CD8-positive, alpha-beta T cell (primary cell): ENCODE measurements at regions of chr4 and their contacts with region 1.

Region 1: GRCh38 chr4:143184217-143185116 is at the start of gene USP38:
- DNase-seq: peak; percentile 69 to 94 (median 85)
- ATAC-seq: peak; percentile 82
- H3K4me3 ChIP-seq: peak within 1 kb of the TSS; percentile 48 to 86
- H3K4me3 Mint-ChIP-seq: peak within 1 kb of the TSS; percentile 90
- H3K27ac ChIP-seq: peak within 1 kb of the TSS; percentile 91 to 93
- H3K27ac Mint-ChIP-seq: peak within 1 kb of the TSS; percentile 96
- H3K4me1 ChIP-seq: peaks cover 39% of the 10 kb centered on the region
- H3K4me1 Mint-ChIP-seq: peaks cover 61% of the 10 kb centered on the region
- H3K27me3 ChIP-seq: no peaks in the 10 kb centered on the region
- H3K27me3 Mint-ChIP-seq: no peaks in the 10 kb centered on the region
- CTCF ChIP-seq: no peak
- total RNA-seq, gene USP38: 38.4 to 40.2 TPM

Region 2: GRCh38 chr4:141215030-141215429 is 1969.4 kb before region 1 on chr4:
- CTCF ChIA-PET with region 1: no interaction called
- POLR2A ChIA-PET with region 1: no interaction called
- intact Hi-C with region 1: loop called (anchors 2 to 5 kb)
- DNase-seq: no peak
- ATAC-seq: no peak
- H3K4me3 ChIP-seq: no peak overlapping the region
- H3K4me3 Mint-ChIP-seq: no peak overlapping the region
- H3K27ac ChIP-seq: no peak overlapping the region
- H3K27ac Mint-ChIP-seq: no peak overlapping the region
- H3K4me1 ChIP-seq: no peaks in the 10 kb centered on the region
- H3K4me1 Mint-ChIP-seq: peaks cover 1% of the 10 kb centered on the region
- H3K27me3 ChIP-seq: no peaks in the 10 kb centered on the region
- H3K27me3 Mint-ChIP-seq: peaks cover 13% of the 10 kb centered on the region
- CTCF ChIP-seq: no peak

Region 3: DNA sequence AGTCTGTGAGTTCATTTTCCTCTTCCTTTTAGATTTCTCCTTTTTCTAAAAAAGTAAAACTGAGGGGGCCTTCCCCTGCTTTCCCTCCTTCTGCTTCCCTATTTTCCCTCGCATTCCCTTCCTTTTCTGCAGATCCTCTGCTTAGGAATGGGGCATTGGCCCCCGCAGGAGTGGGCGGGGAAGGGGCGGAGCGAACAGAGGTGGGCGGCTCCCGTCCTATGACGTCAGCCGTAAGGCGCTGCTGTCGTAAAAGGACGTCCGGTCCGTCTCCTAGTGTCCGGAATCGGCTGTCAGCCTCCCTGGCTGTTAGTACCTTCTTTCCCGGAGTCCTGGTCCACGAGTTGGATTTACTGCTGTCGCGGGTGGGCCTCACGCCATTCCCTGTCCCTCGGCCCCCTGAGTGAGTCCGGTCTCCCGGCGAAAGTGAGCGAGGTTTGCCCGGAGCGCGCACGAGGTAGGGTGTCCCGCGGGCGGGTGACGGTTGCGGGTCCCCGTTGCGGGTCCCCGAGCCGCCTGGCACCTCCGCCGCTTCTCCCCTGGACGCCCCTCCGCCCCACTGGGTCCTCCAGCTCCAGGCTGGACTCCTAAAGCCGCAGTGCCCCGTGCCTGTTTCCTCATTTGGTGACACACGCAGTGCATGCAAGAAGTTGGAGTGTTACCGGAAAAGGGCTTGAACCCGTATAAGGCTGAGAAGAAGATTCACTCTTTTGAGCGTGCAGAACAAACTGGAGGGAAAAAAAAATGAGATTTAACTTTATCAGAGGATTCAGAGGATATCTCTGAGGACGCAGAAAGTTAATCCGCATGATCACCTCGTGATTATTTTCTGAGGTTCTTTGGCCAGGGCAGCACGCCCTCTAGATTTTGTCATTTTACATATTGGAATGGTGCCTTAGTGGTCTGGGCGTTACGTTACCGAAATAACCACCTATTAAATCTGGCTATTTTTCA is 1963.5 kb before region 1 on chr4 and contains the start of gene ZNF330:
- CTCF ChIA-PET with region 1: no interaction called
- POLR2A ChIA-PET with region 1: no interaction called
- intact Hi-C with region 1: loop called (anchors 2 to 5 kb)
- DNase-seq: peak; percentile 79 to 95 (median 87)
- ATAC-seq: peak; percentile 91
- H3K4me3 ChIP-seq: peak within 1 kb of the TSS; percentile 88 to 91
- H3K4me3 Mint-ChIP-seq: peak within 1 kb of the TSS; percentile 95
- H3K27ac ChIP-seq: peak within 1 kb of the TSS; percentile 92
- H3K27ac Mint-ChIP-seq: peak within 1 kb of the TSS; percentile 96
- H3K4me1 ChIP-seq: peaks cover 18% of the 10 kb centered on the region
- H3K4me1 Mint-ChIP-seq: peaks cover 48% of the 10 kb centered on the region
- H3K27me3 ChIP-seq: no peaks in the 10 kb centered on the region
- H3K27me3 Mint-ChIP-seq: peaks cover 2% of the 10 kb centered on the region
- CTCF ChIP-seq: no peak
- total RNA-seq, gene ZNF330: 44.1 to 44.9 TPM

Region 4: DNA sequence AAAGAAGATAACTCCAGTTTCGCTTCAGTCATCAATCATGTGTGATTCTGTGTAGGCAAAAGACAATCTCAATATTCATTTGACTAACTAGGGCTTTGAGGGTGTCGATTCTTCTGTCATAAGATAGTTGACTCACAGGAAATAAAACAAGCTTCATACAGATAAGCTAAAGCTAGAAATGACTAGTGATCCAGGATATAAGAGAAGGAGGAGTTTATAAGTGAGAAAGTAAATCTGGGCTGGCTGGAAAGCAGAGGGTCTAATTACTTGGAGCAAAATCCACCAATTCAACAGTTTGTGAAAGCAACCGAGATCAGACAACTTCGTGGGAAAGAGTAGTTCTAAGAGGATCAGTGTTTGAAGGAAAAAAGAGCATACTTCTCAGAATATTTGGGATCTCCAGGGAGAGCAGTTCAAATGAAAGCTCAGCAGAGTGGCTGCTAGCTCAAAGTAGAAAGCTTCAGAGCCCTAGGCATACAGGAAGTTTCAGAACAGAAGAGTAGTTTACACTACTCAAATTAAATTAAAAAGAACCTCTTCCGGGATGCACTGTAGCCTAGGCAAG is 767.7 kb before region 1 on chr4:
- CTCF ChIA-PET with region 1: no interaction called
- POLR2A ChIA-PET with region 1: no interaction called
- intact Hi-C with region 1: loop called (anchors 5 to 10 kb)
- DNase-seq: peak in 2 of 9 experiments; percentile 39 to 64
- ATAC-seq: peak; percentile 91
- H3K4me3 ChIP-seq: no peak overlapping the region
- H3K4me3 Mint-ChIP-seq: peak overlapping the region; percentile 77
- H3K27ac ChIP-seq: peak overlapping the region; percentile 49 to 77
- H3K27ac Mint-ChIP-seq: peak overlapping the region; percentile 95
- H3K4me1 ChIP-seq: peaks cover 26% of the 10 kb centered on the region
- H3K4me1 Mint-ChIP-seq: peaks cover 45% of the 10 kb centered on the region
- H3K27me3 ChIP-seq: no peaks in the 10 kb centered on the region
- H3K27me3 Mint-ChIP-seq: no peaks in the 10 kb centered on the region
- CTCF ChIP-seq: no peak

Region 5: GRCh38 chr4:143513306-143514168 is 329.1 kb after region 1 on chr4 and contains the start of gene SMARCA5:
- CTCF ChIA-PET with region 1: no interaction called
- POLR2A ChIA-PET with region 1: interaction called, 3 read pairs
- intact Hi-C with region 1: loop called (anchors 1 kb)
- DNase-seq: peak; percentile 88 to 100 (median 93)
- ATAC-seq: peak; percentile 86
- H3K4me3 ChIP-seq: peak within 1 kb of the TSS; percentile 68 to 88
- H3K4me3 Mint-ChIP-seq: peak within 1 kb of the TSS; percentile 99
- H3K27ac ChIP-seq: peak within 1 kb of the TSS; percentile 96 to 99
- H3K27ac Mint-ChIP-seq: peak within 1 kb of the TSS; percentile 100
- H3K4me1 ChIP-seq: peaks cover 38% of the 10 kb centered on the region
- H3K4me1 Mint-ChIP-seq: peaks cover 42% of the 10 kb centered on the region
- H3K27me3 ChIP-seq: no peaks in the 10 kb centered on the region
- H3K27me3 Mint-ChIP-seq: no peaks in the 10 kb centered on the region
- CTCF ChIP-seq: no peak
- total RNA-seq, gene SMARCA5: 57.9 to 63.1 TPM

Region 6: GRCh38 chr4:143558823-143559756 is 374.6 kb after region 1 on chr4:
- CTCF ChIA-PET with region 1: no interaction called
- POLR2A ChIA-PET with region 1: no interaction called
- intact Hi-C with region 1: loop called in 1 of 2 experiments (anchors 10 kb)
- DNase-seq: peak; percentile 42 to 84 (median 71)
- ATAC-seq: peak; percentile 78
- H3K4me3 ChIP-seq: peak overlapping the region; percentile 56 to 75
- H3K4me3 Mint-ChIP-seq: peak overlapping the region; percentile 93
- H3K27ac ChIP-seq: peak overlapping the region; percentile 49 to 70
- H3K27ac Mint-ChIP-seq: peak overlapping the region; percentile 90
- H3K4me1 ChIP-seq: peaks cover 8% of the 10 kb centered on the region
- H3K4me1 Mint-ChIP-seq: peaks cover 18% of the 10 kb centered on the region
- H3K27me3 ChIP-seq: no peaks in the 10 kb centered on the region
- H3K27me3 Mint-ChIP-seq: no peaks in the 10 kb centered on the region
- CTCF ChIP-seq: peak; percentile 37

Region 7: DNA sequence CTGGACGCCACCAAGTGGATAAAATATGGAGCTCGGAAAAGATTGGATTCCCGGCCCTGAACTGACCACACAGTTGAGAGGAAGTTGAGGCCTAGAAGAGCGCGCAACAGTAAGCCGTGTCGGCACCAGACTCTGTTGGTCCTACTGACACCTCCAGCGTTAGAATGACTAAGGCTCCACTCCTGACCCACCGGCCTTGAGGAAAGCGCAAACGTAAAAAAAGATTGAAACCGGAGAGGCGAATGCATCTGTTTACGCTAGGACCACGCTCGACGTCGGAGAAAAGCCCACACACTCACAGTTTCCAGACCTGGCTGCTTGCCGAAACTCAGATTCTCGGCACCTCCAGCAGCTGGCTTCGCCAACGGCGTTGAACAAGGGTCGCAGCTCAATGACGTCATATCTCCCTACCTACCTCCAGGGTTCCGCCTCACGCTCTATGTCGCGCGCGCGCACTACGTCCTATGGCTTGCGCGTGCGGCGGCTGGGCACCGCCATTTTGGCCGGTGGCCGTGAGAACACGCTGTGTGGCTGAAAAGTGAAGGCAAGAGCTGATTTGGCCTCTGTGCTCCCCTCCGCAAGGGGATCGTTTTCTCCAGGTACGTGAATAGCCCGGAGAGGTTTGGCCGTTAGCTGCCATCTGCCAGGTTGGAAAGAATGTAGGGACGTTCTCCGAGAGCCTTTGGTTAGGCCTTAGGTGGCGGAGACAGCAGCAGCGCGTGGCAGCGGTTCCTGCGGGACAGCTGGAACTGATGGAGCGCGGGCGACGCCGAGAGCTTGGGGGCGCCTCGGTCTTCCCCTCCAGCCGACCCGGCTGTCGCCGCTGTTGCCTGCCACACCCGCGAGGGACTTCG is 1913.6 kb after region 1 on chr4 and contains the starts of genes ABCE1 and ANAPC10:
- CTCF ChIA-PET with region 1: no interaction called
- POLR2A ChIA-PET with region 1: no interaction called
- intact Hi-C with region 1: loop called (anchors 2 to 5 kb)
- DNase-seq: peak; percentile 84 to 99 (median 97)
- ATAC-seq: peak; percentile 89
- H3K4me3 ChIP-seq: peak within 1 kb of the TSS; percentile 70 to 81
- H3K4me3 Mint-ChIP-seq: peak within 1 kb of the TSS; percentile 95
- H3K27ac ChIP-seq: peak within 1 kb of the TSS; percentile 88 to 91
- H3K27ac Mint-ChIP-seq: peak within 1 kb of the TSS; percentile 98
- H3K4me1 ChIP-seq: peaks cover 41% of the 10 kb centered on the region
- H3K4me1 Mint-ChIP-seq: peaks cover 46% of the 10 kb centered on the region
- H3K27me3 ChIP-seq: no peaks in the 10 kb centered on the region
- H3K27me3 Mint-ChIP-seq: no peaks in the 10 kb centered on the region
- CTCF ChIP-seq: no peak
- total RNA-seq, gene ABCE1: 68.8 to 70.9 TPM
- total RNA-seq, gene ANAPC10: 24.5 to 26.7 TPM